PC-9 (cell line): ENCODE measurements at regions of chr1 and their contacts with region 1.

Region 1: DNA sequence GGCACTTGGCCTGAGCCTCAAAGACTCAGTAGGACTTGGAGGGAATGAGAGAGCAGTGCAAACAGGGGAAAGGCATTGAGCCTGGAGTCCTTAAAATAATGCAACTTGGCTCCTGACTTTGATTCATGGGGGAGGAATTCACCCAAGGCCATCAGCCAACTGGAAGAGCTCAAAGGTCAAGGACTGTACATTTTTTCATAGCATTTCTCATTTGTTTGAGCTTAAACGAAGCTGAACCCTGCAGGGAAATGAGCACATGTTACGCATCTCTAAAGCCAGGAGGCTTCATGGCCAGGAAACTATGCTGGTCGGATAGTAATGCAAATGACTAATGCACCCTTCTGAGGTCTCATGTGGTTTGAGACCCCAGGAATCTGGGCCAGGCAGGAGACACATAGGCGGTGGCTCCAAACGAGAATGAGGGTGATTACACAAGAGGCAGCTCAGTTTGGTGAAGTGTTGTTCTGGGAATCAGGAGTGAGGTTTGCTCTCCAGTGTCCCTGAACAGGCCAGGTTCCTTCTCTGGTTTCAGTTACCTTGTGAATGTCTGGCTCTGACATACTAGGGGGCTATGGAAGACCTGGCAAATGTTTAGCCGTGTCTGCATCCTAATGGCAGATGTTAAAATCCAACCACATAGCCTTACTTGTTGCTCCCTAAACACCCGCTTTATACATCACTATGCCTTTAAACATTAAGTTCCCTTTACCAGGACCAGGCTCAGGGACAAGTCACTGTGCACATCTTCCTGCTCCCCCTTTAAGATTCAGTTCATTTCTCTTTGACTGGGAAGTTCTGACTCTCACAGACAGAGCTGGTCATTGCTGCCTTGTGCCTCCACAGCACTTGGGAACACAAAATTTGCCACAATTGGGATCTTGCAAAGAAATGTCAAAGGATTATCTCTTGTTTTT is 503.9 kb upstream of the USP24 start:
- DNase-seq: peak; percentile 85 to 99
- H3K4me3 ChIP-seq: no peak overlapping the region
- H3K27ac ChIP-seq: peak overlapping the region; percentile 92
- H3K4me1 ChIP-seq: peaks cover 40% of the 10 kb centered on the region
- H3K27me3 ChIP-seq: no peaks in the 10 kb centered on the region
- CTCF ChIP-seq: no peak

Region 2: DNA sequence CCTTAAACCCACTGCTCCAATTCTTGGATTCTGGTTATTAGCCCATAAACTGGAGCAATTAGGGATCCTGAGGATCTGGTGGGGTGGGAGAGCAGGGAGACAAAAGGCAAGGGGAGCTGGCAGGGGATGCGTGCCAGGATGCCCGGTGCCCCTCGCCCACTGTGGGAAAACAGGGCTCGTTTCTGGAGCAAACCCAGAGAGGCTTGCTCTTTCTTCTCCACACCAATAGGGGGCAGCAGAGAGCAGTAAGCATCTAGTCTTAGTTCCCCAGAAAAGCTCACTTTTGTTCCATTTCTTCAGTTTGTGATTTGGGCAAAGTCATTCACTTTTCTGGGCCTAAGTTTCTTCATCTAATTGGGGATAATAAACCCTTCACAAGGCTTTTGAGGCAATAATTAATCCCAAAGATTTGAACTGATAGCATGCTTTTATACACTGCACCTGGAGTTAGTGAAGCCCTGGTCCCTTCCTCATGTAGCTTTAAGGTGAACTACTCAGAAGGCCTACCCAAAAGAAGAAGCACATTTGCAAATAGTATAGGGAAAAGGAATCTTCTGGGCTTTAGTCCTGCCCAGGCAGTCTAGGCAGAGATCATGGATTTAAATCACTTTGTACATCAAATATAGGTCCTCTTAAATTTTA is 343.3 kb before region 1 on chr1:
- CTCF ChIA-PET with region 1: no interaction called
- POLR2A ChIA-PET with region 1: no interaction called
- intact Hi-C with region 1: loop called (anchors 10 kb)
- DNase-seq: peak in 1 of 2 experiments; percentile 25
- H3K4me3 ChIP-seq: no peak overlapping the region
- H3K27ac ChIP-seq: no peak overlapping the region
- H3K4me1 ChIP-seq: no peaks in the 10 kb centered on the region; the same call in 1 of the 2 replicates
- H3K27me3 ChIP-seq: no peaks in the 10 kb centered on the region
- CTCF ChIP-seq: peak; percentile 88

Region 3: GRCh38 chr1:55506686-55507577 is 212.1 kb before region 1 on chr1:
- CTCF ChIA-PET with region 1: no interaction called
- POLR2A ChIA-PET with region 1: no interaction called
- intact Hi-C with region 1: loop called (anchors 5 kb)
- DNase-seq: peak; percentile 16 to 80
- H3K4me3 ChIP-seq: no peak overlapping the region
- H3K27ac ChIP-seq: peak overlapping the region; percentile 45
- H3K4me1 ChIP-seq: peaks cover 39% of the 10 kb centered on the region
- H3K27me3 ChIP-seq: no peaks in the 10 kb centered on the region
- CTCF ChIP-seq: no peak; the same call in 1 of the 2 replicates

Region 4: DNA sequence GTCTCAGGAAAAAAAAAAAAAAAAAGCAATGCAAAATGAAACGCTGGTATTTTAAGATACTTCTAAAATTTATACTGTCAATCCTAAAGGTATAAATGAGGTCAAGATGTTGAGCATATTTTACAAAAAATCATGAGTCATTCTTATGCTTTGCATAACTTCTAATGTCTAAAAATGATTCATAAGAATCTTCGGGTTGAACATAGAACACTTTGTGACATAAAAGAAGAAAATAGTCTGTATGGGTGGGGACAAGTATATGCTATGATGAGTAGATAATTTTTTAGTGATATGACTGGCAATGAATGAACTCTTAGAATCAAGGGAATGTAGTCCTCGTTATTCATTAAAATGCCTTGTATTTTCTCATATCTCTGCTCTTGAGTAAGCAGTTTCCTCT is 87.0 kb before region 1 on chr1:
- CTCF ChIA-PET with region 1: no interaction called
- POLR2A ChIA-PET with region 1: no interaction called
- intact Hi-C with region 1: loop called (anchors 2 kb)
- DNase-seq: peak in 1 of 2 experiments; percentile 79
- H3K4me3 ChIP-seq: no peak overlapping the region
- H3K27ac ChIP-seq: peak overlapping the region; percentile 45
- H3K4me1 ChIP-seq: peaks cover 27% of the 10 kb centered on the region
- H3K27me3 ChIP-seq: no peaks in the 10 kb centered on the region
- CTCF ChIP-seq: no peak

Region 5: GRCh38 chr1:55684131-55684650 is 34.8 kb before region 1 on chr1:
- CTCF ChIA-PET with region 1: no interaction called
- POLR2A ChIA-PET with region 1: no interaction called
- intact Hi-C with region 1: no loop called
- DNase-seq: peak in 1 of 2 experiments; percentile 78
- H3K4me3 ChIP-seq: no peak overlapping the region
- H3K27ac ChIP-seq: no peak overlapping the region
- H3K4me1 ChIP-seq: 0 out of 2 replicates have a peak, but pooled peaks cover 14% of the 10 kb centered on the region
- H3K27me3 ChIP-seq: no peaks in the 10 kb centered on the region
- CTCF ChIP-seq: no peak

Region 6: DNA sequence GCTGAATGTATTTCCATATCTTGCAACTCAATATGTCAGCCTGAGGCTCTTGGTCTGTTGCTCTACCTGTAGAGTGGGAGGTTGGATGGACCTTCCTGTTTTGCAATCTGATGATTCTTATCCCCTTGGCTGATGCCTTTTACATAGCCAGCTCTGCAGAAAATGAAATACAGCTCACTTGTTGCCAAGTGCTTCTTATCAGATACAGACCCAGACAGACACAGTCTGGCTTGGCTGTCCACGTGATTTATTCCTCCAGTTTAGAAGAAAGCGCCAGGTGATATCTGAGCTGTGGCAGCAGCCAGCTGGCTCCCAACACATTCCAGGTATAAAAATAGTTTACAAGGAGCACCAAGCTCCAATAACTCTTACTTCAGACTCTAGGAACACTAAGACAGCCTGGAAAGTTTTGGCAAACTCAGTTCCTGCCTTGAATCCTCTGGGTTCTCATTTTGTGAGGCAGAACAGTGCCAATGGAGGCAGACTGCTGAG is 24.7 kb before region 1 on chr1:
- CTCF ChIA-PET with region 1: no interaction called
- POLR2A ChIA-PET with region 1: interaction called, 7 read pairs
- intact Hi-C with region 1: loop called (anchors 1 kb)
- DNase-seq: peak; percentile 65 to 70
- H3K4me3 ChIP-seq: no peak overlapping the region
- H3K27ac ChIP-seq: no peak overlapping the region
- H3K4me1 ChIP-seq: no peaks in the 10 kb centered on the region
- H3K27me3 ChIP-seq: no peaks in the 10 kb centered on the region
- CTCF ChIP-seq: no peak

Region 7: GRCh38 chr1:55781944-55782482 is 63.0 kb after region 1 on chr1:
- CTCF ChIA-PET with region 1: no interaction called
- POLR2A ChIA-PET with region 1: interaction called, 5 read pairs
- intact Hi-C with region 1: loop called (anchors 1 kb)
- DNase-seq: peak in 1 of 2 experiments; percentile 77
- H3K4me3 ChIP-seq: no peak overlapping the region
- H3K27ac ChIP-seq: no peak overlapping the region
- H3K4me1 ChIP-seq: peaks cover 47% of the 10 kb centered on the region
- H3K27me3 ChIP-seq: no peaks in the 10 kb centered on the region
- CTCF ChIP-seq: no peak

Region 8: DNA sequence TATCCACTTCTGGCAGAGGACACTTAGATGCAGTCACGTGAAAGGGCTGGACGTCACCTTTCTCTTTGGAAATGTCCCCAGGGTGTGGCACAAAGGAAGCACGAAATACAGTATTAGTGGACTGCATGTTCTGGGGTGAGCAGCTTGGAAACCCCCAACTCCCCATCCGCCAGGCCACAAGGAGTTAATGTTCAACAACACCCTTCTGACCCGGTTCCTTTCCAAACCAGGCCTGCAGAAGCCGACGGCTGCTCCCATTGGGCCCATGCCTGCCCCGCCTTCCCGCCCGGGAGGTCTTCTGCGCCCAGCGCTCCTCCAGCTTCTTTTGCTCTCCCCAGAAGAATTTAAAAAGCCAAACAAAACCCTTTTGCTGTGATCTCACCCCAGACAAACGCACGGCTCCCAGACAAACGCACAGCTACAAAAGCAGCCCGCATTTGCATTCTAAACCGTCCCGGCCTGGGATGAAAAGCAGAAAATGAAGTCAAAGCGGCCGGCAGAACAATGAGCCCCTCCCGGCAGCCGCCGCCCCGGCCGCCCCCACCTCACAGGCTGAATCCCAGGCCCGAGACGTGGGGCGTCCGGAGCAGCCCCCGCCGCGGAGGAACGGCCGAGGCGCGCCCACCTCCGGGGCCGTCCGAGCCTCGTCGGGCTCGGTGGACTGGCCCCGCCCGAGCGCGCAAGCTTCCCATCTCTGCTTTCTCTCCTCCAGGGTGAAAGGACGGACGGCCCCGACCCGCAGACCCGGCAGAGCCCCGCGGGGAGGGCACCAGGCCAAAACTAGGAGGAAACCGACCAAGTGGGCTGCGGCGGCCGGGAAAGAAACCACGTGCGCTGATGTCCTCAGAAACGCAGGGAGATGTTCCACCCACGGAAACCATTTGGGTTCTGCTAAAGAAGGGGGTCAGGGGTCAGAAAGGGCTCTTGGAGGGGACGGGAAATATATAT is 758.4 kb after region 1 on chr1:
- CTCF ChIA-PET with region 1: no interaction called
- POLR2A ChIA-PET with region 1: interaction called, 11 read pairs
- intact Hi-C with region 1: no loop called
- DNase-seq: no peak
- H3K4me3 ChIP-seq: no peak overlapping the region
- H3K27ac ChIP-seq: no peak overlapping the region
- H3K4me1 ChIP-seq: peaks cover 7% of the 10 kb centered on the region; the same call in 1 of the 2 replicates
- H3K27me3 ChIP-seq: no peaks in the 10 kb centered on the region
- CTCF ChIP-seq: no peak